Psoas muscle (tissue), 8 donors: ENCODE measurements at regions of chr1 and their contacts with region 1.

Region 1: GRCh38 chr1:165928075-165928731 is 100.8 kb downstream of the UCK2 start:
- DNase-seq: no peak
- ATAC-seq: peak; percentile 55 to 84 (median 68)
- H3K4me3 ChIP-seq: no peak overlapping the region
- H3K27ac ChIP-seq: no peak overlapping the region
- H3K4me1 ChIP-seq: no peaks in the 10 kb centered on the region
- H3K27me3 ChIP-seq: no peaks in the 10 kb centered on the region
- CTCF ChIP-seq: peak; percentile 64

Region 2: GRCh38 chr1:165898837-165899236 is 29.4 kb before region 1 on chr1:
- intact Hi-C with region 1: no loop called
- DNase-seq: peak in 1 of 2 donors; percentile 61
- ATAC-seq: peak; percentile 74 to 85 (median 80)
- H3K4me3 ChIP-seq: no peak overlapping the region
- H3K27ac ChIP-seq: peak overlapping the region; percentile 93
- H3K4me1 ChIP-seq: peaks cover 46% of the 10 kb centered on the region
- H3K27me3 ChIP-seq: no peaks in the 10 kb centered on the region
- CTCF ChIP-seq: no peak

Region 3: DNA sequence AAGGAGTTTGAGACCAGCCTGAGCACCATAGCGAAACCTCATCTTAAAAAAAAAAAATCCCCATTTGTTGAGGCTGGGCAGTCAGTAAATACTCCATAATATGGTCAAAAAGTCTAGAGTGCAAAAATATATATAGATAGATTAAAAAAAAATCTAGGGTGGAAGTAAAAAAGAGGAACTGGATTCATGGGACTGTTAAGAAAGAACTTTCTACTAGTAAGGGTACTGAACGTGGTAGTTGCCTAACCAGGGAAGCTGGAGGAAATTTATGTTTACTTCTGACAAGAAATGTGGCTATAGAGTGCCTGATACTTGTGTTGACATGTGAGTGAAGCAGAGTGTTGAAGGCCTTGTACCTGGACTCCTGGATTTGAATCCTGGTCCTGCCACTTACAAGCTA is 504.5 kb after region 1 on chr1:
- intact Hi-C with region 1: loop called (anchors 2 kb)
- DNase-seq: no peak
- ATAC-seq: no peak
- H3K4me3 ChIP-seq: no peak overlapping the region
- H3K27ac ChIP-seq: no peak overlapping the region
- H3K4me1 ChIP-seq: no peaks in the 10 kb centered on the region
- H3K27me3 ChIP-seq: no peaks in the 10 kb centered on the region
- CTCF ChIP-seq: no peak

Region 4: GRCh38 chr1:166479052-166479631 is 550.9 kb after region 1 on chr1:
- intact Hi-C with region 1: loop called (anchors 2 to 5 kb)
- DNase-seq: peak; percentile 31 to 47
- ATAC-seq: no peak
- H3K4me3 ChIP-seq: no peak overlapping the region
- H3K27ac ChIP-seq: no peak overlapping the region
- H3K4me1 ChIP-seq: no peaks in the 10 kb centered on the region
- H3K27me3 ChIP-seq: peaks cover 0 to 3% (median 0%) of the 10 kb centered on the region in 3 donors
- CTCF ChIP-seq: peak; percentile 82

Region 5: DNA sequence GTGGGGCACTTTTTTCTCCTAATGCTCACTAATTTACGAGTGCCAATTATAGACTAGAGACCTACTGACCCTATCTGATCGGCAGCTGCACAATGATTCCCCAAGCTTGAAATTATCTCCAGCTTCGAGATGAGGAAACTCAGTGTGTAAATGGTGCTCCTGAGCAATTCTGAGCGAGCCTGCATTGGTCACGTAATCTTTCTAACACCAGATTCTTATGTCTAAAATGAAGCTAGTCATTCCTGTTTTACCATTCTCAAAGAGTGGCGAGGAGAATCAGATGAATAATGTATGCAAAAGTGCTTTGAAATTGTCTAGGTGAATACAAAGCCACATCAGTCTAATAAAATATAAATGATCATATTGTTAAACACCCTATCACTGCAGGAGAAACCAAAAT is 556.7 kb after region 1 on chr1:
- intact Hi-C with region 1: loop called in 1 of 2 experiments (anchors 5 kb)
- DNase-seq: no peak
- ATAC-seq: no peak
- H3K4me3 ChIP-seq: no peak overlapping the region
- H3K27ac ChIP-seq: no peak overlapping the region
- H3K4me1 ChIP-seq: no peaks in the 10 kb centered on the region
- H3K27me3 ChIP-seq: no peaks in the 10 kb centered on the region
- CTCF ChIP-seq: no peak